ENCODE measurements at regions of chr1 and their contacts with region 1.

Region 1: DNA sequence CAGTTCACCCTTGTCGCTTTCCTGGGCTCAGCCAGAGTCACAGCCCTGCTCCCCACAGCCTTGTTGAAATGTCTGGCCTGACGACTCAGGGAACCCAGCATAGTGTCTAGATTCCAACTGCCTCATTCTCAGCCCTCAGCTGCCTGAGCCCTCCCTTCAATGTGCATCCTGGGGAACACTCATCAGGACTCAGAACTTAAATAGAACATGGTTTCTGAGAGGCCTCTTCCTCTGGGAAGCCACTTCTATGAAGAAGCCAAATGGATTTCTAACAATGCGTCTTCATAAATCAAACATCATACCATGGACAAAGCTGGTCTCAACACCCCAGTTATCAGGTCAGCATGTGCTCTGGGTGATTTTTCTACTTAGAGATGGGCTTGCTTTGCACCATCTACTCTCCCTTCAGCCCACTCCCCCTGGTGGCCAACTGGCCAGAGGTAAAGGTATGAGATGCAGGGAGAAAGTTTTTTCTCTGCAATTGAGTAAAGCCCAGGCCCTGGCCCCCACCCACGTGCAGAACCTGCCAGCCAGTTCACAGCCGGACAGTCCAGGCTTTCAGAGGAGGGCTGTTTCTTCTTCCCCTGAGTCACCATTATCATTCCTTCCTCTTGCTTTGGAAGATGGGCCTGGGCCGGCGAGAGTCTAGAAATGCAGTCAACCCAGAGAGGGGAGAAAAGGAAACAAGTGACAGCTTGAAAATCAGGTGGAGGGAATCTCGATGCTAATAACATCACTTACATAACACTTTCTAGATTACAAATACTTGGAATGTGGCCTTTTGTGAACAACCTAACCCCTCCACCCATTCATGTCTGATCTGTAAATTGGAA is 32.1 kb downstream of the CD244 start:
- DNase-seq: peak; percentile 84
- H3K4me3 ChIP-seq: no peak overlapping the region
- H3K27ac ChIP-seq: no peak overlapping the region
- H3K4me1 ChIP-seq: no peaks in the 10 kb centered on the region
- H3K27me3 ChIP-seq: no peaks in the 10 kb centered on the region
- CTCF ChIP-seq: peak; percentile 51 to 81 (median 66)
- EP300 ChIP-seq: no peak
- POLR2A ChIP-seq: no peak

Region 2: DNA sequence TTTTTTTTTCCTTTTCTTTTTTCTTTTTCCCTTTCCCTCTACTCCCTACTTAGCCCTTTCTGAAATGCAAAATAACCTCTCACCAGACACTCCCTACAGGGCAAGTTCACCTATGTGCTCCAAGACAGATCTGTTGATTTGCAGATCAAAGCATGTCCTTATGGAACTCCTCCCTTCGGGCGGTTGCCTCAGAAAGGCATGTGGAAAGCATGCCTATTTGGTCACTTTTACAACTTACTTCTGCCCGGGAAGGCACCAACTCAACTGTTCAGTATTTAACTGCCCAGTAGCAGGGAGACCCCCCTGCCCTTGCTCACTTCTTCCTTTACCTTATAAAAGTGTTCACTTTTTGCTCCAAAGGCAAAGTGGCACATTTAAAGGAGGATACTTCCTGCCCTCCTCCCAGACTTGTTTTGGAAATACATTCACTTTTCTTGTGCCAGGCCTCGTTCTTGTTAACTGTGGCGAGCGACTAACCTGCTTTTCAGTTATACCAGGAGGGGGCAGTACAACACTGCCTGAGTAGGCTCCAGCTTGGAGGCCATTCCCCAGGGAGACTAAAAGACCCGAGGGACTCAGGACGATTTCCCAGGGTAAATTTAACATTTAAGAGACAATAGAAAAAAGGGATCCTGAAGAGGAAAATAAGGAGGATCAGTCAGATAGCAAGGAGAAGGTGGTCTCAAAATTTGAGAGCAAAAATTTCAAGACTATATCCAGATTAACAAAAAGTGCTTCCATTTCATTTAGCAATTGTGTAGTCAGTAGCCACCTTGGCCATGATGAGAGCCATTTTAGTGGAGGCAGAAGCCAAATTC is 103.8 kb before region 1 on chr1:
- in situ Hi-C with region 1: loop called in 1 of 4 experiments (anchors 5 kb)
- intact Hi-C with region 1: no loop called
- DNase-seq: peak; percentile 67
- H3K4me3 ChIP-seq: no peak overlapping the region
- H3K27ac ChIP-seq: peak overlapping the region; percentile 64 to 75 (median 70)
- H3K4me1 ChIP-seq: peaks cover 2 to 16% (median 6%) of the 10 kb centered on the region in 4 donors
- H3K27me3 ChIP-seq: no peaks in the 10 kb centered on the region
- CTCF ChIP-seq: peak; percentile 68 to 93 (median 82)
- EP300 ChIP-seq: no peak
- POLR2A ChIP-seq: no peak

Region 3: DNA sequence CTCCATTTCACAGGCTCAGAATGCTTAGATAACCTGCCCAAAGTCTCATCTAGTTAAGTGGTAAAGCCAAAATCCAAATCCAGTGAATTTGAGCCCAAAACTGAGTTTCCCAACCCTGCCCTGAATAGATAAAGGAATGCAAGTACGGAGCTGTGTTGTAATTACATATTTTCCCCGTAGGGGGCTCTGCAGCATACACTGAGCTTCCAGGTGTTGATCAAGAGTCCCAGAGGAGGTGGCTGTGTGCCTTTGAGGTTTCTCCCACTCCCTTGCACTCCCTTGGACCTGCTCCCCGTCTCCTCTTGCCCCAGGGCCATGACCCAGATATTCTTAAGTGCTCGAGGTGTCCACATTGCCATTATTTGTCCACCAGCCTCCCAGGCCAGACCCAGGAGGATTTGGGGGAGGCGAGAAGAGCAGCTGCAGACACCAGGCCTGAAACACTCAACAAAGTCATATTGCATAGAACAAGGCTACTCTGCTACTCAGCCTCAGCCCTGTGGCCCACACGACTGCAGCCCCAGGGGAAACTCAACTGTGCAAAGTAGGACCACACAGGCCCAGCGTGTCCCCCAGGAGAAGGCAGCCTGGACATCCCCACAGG is 52.9 kb before region 1 on chr1:
- in situ Hi-C with region 1: loop called in 1 of 4 experiments (anchors 10 kb)
- intact Hi-C with region 1: no loop called
- DNase-seq: peak; percentile 49
- H3K4me3 ChIP-seq: no peak overlapping the region
- H3K27ac ChIP-seq: no peak overlapping the region
- H3K4me1 ChIP-seq: peaks cover 14 to 20% (median 18%) of the 10 kb centered on the region in 4 donors
- H3K27me3 ChIP-seq: no peaks in the 10 kb centered on the region
- CTCF ChIP-seq: peak; percentile 50 to 75 (median 61)
- EP300 ChIP-seq: no peak
- POLR2A ChIP-seq: no peak

Region 4: GRCh38 chr1:160951443-160952128 is 121.0 kb after region 1 on chr1:
- in situ Hi-C with region 1: loop called in 3 of 4 experiments (anchors 5 kb)
- intact Hi-C with region 1: loop called (anchors 10 kb)
- DNase-seq: peak; percentile 82
- H3K4me3 ChIP-seq: no peak overlapping the region
- H3K27ac ChIP-seq: no peak overlapping the region
- H3K4me1 ChIP-seq: peaks cover 0 to 9% (median 3%) of the 10 kb centered on the region in 4 donors
- H3K27me3 ChIP-seq: no peaks in the 10 kb centered on the region
- CTCF ChIP-seq: peak; percentile 42 to 76 (median 69)
- EP300 ChIP-seq: no peak
- POLR2A ChIP-seq: no peak

Region 5: DNA sequence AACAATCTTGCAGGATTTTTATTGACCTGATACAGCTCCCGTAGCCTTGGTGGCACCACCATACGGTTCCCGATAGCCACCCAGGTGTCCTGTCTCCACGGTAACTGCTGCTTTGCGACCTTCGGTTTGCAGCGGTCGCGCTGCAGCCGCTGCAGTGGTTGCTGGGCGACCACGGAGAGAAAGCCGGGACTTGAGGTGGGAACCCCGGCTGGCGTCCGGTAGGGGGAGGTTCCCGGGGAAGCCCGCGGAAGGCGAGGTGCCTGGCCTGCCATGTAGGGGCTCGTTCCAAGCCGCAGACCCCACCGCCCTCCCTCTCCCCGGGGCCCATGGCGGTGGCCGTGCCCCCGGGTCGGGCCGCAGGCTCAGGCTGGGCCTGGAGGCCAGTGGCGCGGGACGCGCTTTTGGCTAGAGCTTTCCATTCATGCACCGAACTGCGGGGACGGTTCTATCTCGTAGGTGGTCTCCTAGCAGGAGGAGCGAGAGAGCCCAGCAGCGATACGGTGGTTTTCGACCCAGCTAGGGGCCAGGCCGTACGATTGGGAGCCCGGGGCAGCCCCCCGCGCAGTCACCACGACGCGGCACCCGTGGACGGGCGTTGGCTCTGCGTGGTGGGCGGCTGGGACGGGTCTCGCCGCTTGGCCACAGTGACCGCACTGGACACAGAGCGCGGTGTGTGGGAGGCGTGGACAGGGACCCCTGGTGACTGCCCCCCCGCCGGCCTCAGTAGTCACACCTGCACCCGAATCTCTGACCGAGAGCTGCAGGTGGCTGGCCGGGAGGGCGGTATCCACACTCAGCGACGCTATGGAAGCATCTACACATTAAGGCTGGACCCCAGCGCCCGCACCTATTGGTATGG is 267.9 kb after region 1 on chr1 and contains the start of gene KLHDC9:
- in situ Hi-C with region 1: loop called in 1 of 4 experiments (anchors 25 kb)
- intact Hi-C with region 1: no loop called
- DNase-seq: peak; percentile 91
- H3K4me3 ChIP-seq: peak within 1 kb of the TSS; percentile 51 to 75 (median 61)
- H3K27ac ChIP-seq: peak within 1 kb of the TSS; percentile 66 to 88 (median 76)
- H3K4me1 ChIP-seq: peaks cover 6 to 20% (median 9%) of the 10 kb centered on the region in 4 donors
- H3K27me3 ChIP-seq: no peaks in the 10 kb centered on the region
- CTCF ChIP-seq: peak in 1 of 5 experiments; percentile 26
- EP300 ChIP-seq: no peak
- POLR2A ChIP-seq: no peak
- total RNA-seq, gene KLHDC9: 0.80 to 16.9 (median 8.7) TPM in 3 of 4 donors, not detected in the other

Measured in transverse colon (tissue), 4 donors.